Endothelial cell of umbilical vein (primary cell): ENCODE measurements at regions of chr11 and their contacts with region 1.

Region 1: GRCh38 chr11:128695539-128696221 is 1.8 kb downstream of the FLI1 start:
- DNase-seq: no peak
- H3K4me3 ChIP-seq: peak overlapping the region; percentile 56 to 94 (median 92)
- H3K27ac ChIP-seq: peak overlapping the region; percentile 98
- H3K4me1 ChIP-seq: peaks cover 66% of the 10 kb centered on the region
- H3K27me3 ChIP-seq: no peaks in the 10 kb centered on the region
- CTCF ChIP-seq: no peak
- POLR2A ChIP-seq: peak; percentile 35

Region 2: GRCh38 chr11:128026596-128026995 is 669.1 kb before region 1 on chr11:
- CTCF ChIA-PET with region 1: no interaction called
- POLR2A ChIA-PET with region 1: interaction called, 4 read pairs
- dilution Hi-C with region 1: no loop called
- intact Hi-C with region 1: loop called (anchors 2 kb)
- DNase-seq: peak; percentile 81
- H3K4me3 ChIP-seq: no peak overlapping the region
- H3K27ac ChIP-seq: peak overlapping the region; percentile 39
- H3K4me1 ChIP-seq: peaks cover 25% of the 10 kb centered on the region
- H3K27me3 ChIP-seq: no peaks in the 10 kb centered on the region
- CTCF ChIP-seq: no peak
- POLR2A ChIP-seq: no peak

Region 3: GRCh38 chr11:128210148-128210940 is 485.3 kb before region 1 on chr11:
- CTCF ChIA-PET with region 1: no interaction called
- POLR2A ChIA-PET with region 1: no interaction called
- dilution Hi-C with region 1: no loop called
- intact Hi-C with region 1: loop called (anchors 1 kb)
- DNase-seq: peak; percentile 98
- H3K4me3 ChIP-seq: peak overlapping the region in 1 of 3 experiments; percentile 44
- H3K27ac ChIP-seq: peak overlapping the region; percentile 97
- H3K4me1 ChIP-seq: peaks cover 49% of the 10 kb centered on the region
- H3K27me3 ChIP-seq: no peaks in the 10 kb centered on the region
- CTCF ChIP-seq: no peak
- POLR2A ChIP-seq: no peak

Region 4: DNA sequence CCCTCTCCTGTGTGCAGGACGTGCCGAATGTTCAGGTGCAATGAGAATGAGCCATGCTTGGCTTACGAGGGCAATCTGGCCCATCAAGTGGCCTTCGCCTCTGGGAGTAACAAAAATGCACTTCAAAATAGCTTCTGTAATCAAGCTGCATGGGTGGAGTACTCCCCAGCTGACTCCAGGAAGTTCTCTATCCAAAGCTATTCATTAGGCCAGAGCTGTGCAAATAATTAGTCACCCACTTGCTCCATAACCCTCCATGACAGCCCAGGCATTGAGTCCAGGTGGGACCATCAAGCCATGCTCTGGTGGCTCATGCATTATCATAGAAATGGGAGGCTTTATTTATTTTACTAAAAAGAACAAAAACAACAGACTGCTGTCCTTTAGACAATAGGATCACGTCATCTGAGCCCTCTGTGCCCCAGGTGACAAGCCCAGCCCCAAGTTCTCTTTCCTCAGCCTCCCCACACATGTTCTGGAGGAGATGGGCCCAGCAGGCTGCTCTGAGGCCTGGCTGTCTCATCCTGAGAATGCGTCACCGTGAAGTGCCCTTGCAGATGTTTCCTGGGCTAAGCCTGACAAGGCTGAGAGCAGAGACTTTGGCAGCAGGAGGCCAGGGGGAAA is 353.1 kb before region 1 on chr11:
- CTCF ChIA-PET with region 1: no interaction called
- POLR2A ChIA-PET with region 1: no interaction called
- dilution Hi-C with region 1: no loop called
- intact Hi-C with region 1: loop called (anchors 2 kb)
- DNase-seq: peak; percentile 98
- H3K4me3 ChIP-seq: no peak overlapping the region
- H3K27ac ChIP-seq: peak overlapping the region; percentile 83
- H3K4me1 ChIP-seq: peaks cover 31% of the 10 kb centered on the region
- H3K27me3 ChIP-seq: no peaks in the 10 kb centered on the region
- CTCF ChIP-seq: no peak
- POLR2A ChIP-seq: peak; percentile 47

Region 5: DNA sequence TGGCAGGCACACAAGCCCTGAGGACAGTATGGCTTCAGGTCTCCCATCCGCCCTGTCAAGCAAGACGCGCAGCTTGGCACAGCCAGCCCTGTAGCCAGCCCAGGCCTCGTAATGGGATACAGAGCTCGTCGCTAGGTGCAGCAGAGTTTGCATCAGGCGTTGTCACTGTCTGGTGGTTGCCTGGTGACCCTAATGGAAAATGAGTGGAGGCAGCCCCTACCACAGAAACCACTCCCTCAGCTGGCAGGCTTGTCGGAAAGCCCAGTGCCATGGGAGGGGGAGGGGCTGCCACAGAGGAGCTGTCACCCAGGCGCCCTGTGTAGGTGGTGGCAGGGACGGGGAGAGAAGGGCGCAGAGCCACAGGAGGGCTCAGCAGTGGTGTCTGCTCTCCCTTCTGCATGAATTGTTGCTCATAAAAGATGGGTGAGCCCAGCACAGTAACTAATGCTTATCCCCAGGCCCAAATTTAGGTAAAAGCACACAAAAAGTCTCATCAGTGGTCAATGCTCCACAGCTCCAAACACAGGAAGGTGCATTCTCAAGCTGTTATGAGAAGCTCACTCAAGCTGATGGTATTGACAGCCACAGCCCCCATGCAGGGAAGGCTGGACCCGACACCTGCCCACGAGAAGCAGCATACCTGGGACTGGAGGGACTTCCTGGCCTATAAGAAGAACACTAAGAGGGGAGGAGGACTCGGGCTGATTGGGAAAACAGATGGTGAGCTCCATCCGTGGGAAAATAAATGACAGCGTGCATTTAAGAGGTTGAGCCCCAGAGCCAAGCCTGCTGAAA is 272.9 kb before region 1 on chr11:
- CTCF ChIA-PET with region 1: no interaction called
- POLR2A ChIA-PET with region 1: no interaction called
- dilution Hi-C with region 1: no loop called
- intact Hi-C with region 1: no loop called
- DNase-seq: no peak
- H3K4me3 ChIP-seq: no peak overlapping the region
- H3K27ac ChIP-seq: no peak overlapping the region
- H3K4me1 ChIP-seq: no peaks in the 10 kb centered on the region
- H3K27me3 ChIP-seq: peaks cover 0 to 1% of the 10 kb centered on the region in 2 experiments
- CTCF ChIP-seq: no peak
- POLR2A ChIP-seq: no peak

Region 6: GRCh38 chr11:128678024-128678423 is 17.7 kb before region 1 on chr11:
- CTCF ChIA-PET with region 1: interaction called, 3 read pairs
- POLR2A ChIA-PET with region 1: interaction called, 6 read pairs
- dilution Hi-C with region 1: no loop called
- intact Hi-C with region 1: loop called (anchors 1 kb)
- DNase-seq: peak; percentile 90
- H3K4me3 ChIP-seq: no peak overlapping the region
- H3K27ac ChIP-seq: peak overlapping the region; percentile 53
- H3K4me1 ChIP-seq: peaks cover 28% of the 10 kb centered on the region
- H3K27me3 ChIP-seq: no peaks in the 10 kb centered on the region
- CTCF ChIP-seq: no peak
- POLR2A ChIP-seq: peak; percentile 80

Region 7: GRCh38 chr11:128720522-128720985 is 24.9 kb after region 1 on chr11:
- CTCF ChIA-PET with region 1: interaction called, 4 read pairs
- POLR2A ChIA-PET with region 1: interaction called, 18 read pairs
- dilution Hi-C with region 1: no loop called
- intact Hi-C with region 1: loop called (anchors 1 kb)
- DNase-seq: peak; percentile 58
- H3K4me3 ChIP-seq: no peak overlapping the region
- H3K27ac ChIP-seq: peak overlapping the region; percentile 51
- H3K4me1 ChIP-seq: peaks cover 61% of the 10 kb centered on the region
- H3K27me3 ChIP-seq: no peaks in the 10 kb centered on the region
- CTCF ChIP-seq: no peak
- POLR2A ChIP-seq: no peak

Region 8: DNA sequence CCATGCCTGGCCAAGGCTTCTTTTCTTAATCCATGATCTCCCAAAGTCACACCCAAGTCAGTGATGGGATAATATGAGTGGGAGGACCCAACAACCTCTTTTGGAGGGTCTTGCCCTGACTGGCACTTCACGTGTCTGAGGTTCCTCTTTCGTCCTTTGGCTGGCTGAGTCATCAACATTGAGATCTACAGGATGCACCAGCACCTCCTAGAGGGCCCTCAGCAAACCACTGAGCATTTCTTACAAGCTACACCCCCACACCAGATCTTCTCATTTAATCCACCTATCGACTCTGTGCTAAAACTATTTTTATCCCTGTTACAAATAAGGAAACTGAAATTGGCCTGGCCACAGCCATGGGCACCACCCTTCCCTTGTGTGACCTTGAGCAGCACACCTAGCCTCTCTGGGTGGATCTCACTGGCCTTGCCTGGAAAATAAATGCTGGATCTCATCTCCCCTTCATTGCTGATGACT is 61.6 kb after region 1 on chr11:
- CTCF ChIA-PET with region 1: interaction called, 9 read pairs
- POLR2A ChIA-PET with region 1: no interaction called
- dilution Hi-C with region 1: no loop called
- intact Hi-C with region 1: loop called (anchors 2 kb)
- DNase-seq: peak; percentile 75
- H3K4me3 ChIP-seq: no peak overlapping the region
- H3K27ac ChIP-seq: peak overlapping the region; percentile 21
- H3K4me1 ChIP-seq: peaks cover 19% of the 10 kb centered on the region
- H3K27me3 ChIP-seq: no peaks in the 10 kb centered on the region
- CTCF ChIP-seq: peak; percentile 55 to 61
- POLR2A ChIP-seq: no peak